ENCODE measurements at regions of chr9 and their contacts with region 1.

Region 1: GRCh38 chr9:101311758-101312420 is 72.9 kb downstream of the BAAT start:
- DNase-seq: no peak
- H3K4me3 Mint-ChIP-seq: no peak overlapping the region
- H3K27ac Mint-ChIP-seq: no peak overlapping the region
- H3K4me1 Mint-ChIP-seq: no peaks in the 10 kb centered on the region
- H3K27me3 Mint-ChIP-seq: peaks cover 3% of the 10 kb centered on the region

Region 2: GRCh38 chr9:100700689-100701318 is 611.1 kb before region 1 on chr9:
- CTCF ChIA-PET with region 1: interaction called, 9 read pairs
- POLR2A ChIA-PET with region 1: no interaction called
- intact Hi-C with region 1: loop called (anchors 2 kb)
- DNase-seq: no peak
- H3K4me3 Mint-ChIP-seq: no peak overlapping the region
- H3K27ac Mint-ChIP-seq: no peak overlapping the region
- H3K4me1 Mint-ChIP-seq: no peaks in the 10 kb centered on the region
- H3K27me3 Mint-ChIP-seq: no peaks in the 10 kb centered on the region

Region 3: DNA sequence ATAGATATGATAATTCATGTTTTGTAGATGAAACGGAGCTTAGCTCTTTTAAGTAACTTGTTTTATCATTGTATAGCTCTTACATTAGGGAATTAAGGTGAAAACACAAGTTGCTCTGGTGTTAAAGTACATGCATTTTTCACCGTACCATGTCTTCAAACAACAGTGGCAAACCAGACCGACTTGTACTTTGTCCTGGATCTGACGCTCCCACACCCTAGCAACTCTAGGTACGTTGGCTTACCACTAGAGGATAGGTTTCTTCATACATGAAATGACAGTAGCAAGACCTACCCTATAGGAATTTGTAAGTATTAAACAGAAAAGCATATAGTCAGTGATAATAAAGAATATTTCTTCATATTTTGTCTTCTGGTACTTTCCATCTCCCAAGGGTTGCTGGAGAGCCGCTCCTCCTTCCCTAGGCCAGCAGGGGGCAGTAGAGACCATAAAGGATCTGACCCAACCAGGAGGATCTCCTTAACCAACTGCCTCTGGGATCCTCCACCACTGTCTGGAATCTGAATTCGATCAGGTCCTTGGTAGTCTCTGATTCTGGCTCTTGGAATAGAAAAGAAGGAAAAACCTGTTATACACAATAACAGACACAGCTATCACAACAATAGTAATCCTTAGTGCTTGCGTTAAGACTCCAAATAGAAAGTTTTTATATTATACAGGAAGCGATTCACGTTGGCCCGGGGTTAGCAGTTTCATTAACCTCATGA is 597.4 kb before region 1 on chr9:
- CTCF ChIA-PET with region 1: interaction called, 21 read pairs
- POLR2A ChIA-PET with region 1: no interaction called
- intact Hi-C with region 1: loop called (anchors 1 kb)
- DNase-seq: peak; percentile 59
- H3K4me3 Mint-ChIP-seq: no peak overlapping the region
- H3K27ac Mint-ChIP-seq: no peak overlapping the region
- H3K4me1 Mint-ChIP-seq: no peaks in the 10 kb centered on the region
- H3K27me3 Mint-ChIP-seq: peaks cover 3% of the 10 kb centered on the region

Region 4: DNA sequence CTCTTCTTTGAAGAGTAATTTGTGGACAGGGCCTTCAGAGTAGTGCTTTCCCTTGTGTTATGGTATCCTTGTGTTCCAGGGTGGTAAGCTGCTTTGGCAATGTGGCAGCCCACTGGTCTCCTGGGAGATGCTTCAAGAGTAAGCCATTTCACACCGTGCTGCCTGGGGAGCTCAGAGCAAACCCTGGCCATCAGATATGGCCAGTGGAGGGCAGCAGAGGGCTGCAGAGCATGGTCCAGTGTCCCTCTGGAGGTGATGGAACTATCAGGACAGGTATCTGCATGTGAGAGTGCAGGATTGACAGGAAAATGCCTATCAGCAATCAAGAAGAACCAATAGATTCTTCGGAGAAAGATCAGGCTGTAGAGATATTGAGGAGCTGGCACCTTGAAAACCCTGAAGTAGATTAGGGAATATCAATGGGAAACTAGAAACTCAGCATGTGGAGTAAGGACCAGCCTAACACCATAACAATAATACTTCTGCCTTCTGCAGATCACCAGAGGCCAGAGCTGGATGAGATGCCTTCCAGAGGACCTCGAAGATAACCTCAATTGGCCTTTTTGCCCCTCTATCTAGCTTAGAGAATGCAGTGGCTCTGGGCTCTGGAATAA is 192.6 kb before region 1 on chr9:
- CTCF ChIA-PET with region 1: interaction called, 17 read pairs
- POLR2A ChIA-PET with region 1: no interaction called
- intact Hi-C with region 1: no loop called
- DNase-seq: peak; percentile 31
- H3K4me3 Mint-ChIP-seq: no peak overlapping the region
- H3K27ac Mint-ChIP-seq: no peak overlapping the region
- H3K4me1 Mint-ChIP-seq: no peaks in the 10 kb centered on the region
- H3K27me3 Mint-ChIP-seq: no peaks in the 10 kb centered on the region

Region 5: GRCh38 chr9:101229606-101230005 is 82.3 kb before region 1 on chr9:
- CTCF ChIA-PET with region 1: no interaction called
- POLR2A ChIA-PET with region 1: no interaction called
- intact Hi-C with region 1: no loop called
- DNase-seq: no peak
- H3K4me3 Mint-ChIP-seq: no peak overlapping the region
- H3K27ac Mint-ChIP-seq: no peak overlapping the region
- H3K4me1 Mint-ChIP-seq: no peaks in the 10 kb centered on the region
- H3K27me3 Mint-ChIP-seq: no peaks in the 10 kb centered on the region